ENCODE measurements at regions of chr2 and their contacts with region 1.

Region 1: GRCh38 chr2:7097348-7097895 is 180.2 kb downstream of the RNF144A start:
- DNase-seq: peak; percentile 60 to 87 (median 74)
- ATAC-seq: peak; percentile 90
- H3K4me3 ChIP-seq: peak overlapping the region; percentile 35 to 51
- H3K4me3 Mint-ChIP-seq: peak overlapping the region; percentile 78
- H3K27ac ChIP-seq: no peak overlapping the region
- H3K27ac Mint-ChIP-seq: no peak overlapping the region
- H3K4me1 ChIP-seq: peaks cover 6% of the 10 kb centered on the region
- H3K4me1 Mint-ChIP-seq: peaks cover 4% of the 10 kb centered on the region
- H3K27me3 ChIP-seq: no peaks in the 10 kb centered on the region
- H3K27me3 Mint-ChIP-seq: no peaks in the 10 kb centered on the region
- CTCF ChIP-seq: peak; percentile 99

Region 2: DNA sequence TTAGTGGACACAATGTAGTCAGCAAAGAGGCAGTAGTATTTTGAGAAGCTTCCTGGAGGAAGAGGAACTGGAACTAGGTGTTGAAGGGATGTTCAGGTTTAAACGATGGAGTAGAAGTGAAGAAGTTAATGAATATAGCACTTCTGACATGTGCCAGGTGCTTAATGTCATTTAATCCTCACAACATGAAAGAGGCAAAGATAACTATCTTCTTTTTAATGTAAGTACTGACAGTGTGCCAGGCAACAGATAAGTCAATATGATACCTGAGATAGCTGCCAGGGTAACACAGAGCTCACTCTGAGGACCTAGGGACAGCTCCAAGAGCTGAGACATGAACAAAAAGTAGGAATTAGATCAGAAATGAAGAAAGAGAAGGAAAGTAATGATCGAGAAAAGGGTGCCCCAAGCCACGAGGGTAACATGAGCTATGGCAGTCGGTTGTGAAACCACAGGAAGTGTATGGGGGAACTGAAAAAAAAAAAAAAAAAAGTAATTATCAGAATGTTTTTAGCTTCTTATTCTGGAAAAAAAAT is 39.5 kb before region 1 on chr2:
- CTCF ChIA-PET with region 1: interaction called, 10 read pairs
- POLR2A ChIA-PET with region 1: interaction called, 4 read pairs
- intact Hi-C with region 1: no loop called
- DNase-seq: peak in 3 of 9 experiments; percentile 28 to 56 (median 33)
- ATAC-seq: peak; percentile 43
- H3K4me3 ChIP-seq: peak overlapping the region in 1 of 2 experiments; percentile 30
- H3K4me3 Mint-ChIP-seq: peak overlapping the region; percentile 75
- H3K27ac ChIP-seq: peak overlapping the region; percentile 30 to 70
- H3K27ac Mint-ChIP-seq: peak overlapping the region; percentile 91
- H3K4me1 ChIP-seq: peaks cover 53% of the 10 kb centered on the region
- H3K4me1 Mint-ChIP-seq: peaks cover 25% of the 10 kb centered on the region
- H3K27me3 ChIP-seq: no peaks in the 10 kb centered on the region
- H3K27me3 Mint-ChIP-seq: no peaks in the 10 kb centered on the region
- CTCF ChIP-seq: no peak

Region 3: DNA sequence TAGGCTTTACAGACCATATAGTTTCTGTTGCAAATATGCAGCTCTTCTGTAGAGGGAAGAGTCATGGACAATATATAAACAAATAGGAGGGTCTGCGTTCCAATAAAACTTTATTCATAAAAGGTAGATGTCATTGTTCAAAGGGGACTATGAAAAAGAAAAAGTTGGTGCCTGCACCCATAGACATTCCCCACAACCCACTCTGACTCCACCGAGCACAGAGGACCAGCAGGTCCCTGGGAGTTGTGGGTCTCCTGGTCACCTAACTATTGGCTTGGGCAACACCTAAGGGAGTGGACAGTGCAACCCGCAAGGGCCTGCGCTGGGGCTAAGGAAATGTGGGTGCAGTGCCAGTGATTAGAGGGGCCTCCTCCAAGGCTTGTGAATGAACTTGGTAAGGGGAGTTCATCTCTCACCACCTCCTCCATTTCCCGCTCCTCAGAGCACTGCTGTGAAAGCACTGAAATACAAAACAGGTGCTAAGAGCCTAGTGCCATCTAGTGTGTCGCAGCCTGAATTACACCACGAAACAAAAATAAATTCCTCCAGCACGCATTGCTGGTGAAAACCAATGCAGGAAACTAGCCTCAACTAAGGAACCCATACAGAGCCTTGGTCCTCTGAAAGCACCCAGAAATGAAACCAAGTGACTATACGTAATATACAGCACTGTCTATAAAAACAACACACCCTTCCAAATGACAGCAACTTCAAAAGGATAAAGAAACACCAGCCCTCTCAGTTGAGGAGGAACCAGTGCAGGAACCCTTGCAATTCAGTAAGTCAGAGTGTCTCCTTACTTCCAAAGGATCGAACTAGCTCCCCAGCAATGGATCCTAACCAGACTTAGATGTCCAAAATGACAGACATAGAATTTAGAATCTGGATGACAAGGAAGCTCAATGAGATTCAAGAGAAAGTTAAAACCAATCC is 13.6 kb before region 1 on chr2:
- CTCF ChIA-PET with region 1: interaction called, 10 read pairs
- POLR2A ChIA-PET with region 1: no interaction called
- intact Hi-C with region 1: no loop called
- DNase-seq: peak in 2 of 9 experiments; percentile 23 to 31
- ATAC-seq: no peak
- H3K4me3 ChIP-seq: no peak overlapping the region
- H3K4me3 Mint-ChIP-seq: no peak overlapping the region
- H3K27ac ChIP-seq: no peak overlapping the region
- H3K27ac Mint-ChIP-seq: no peak overlapping the region
- H3K4me1 ChIP-seq: no peaks in the 10 kb centered on the region
- H3K4me1 Mint-ChIP-seq: no peaks in the 10 kb centered on the region
- H3K27me3 ChIP-seq: no peaks in the 10 kb centered on the region
- H3K27me3 Mint-ChIP-seq: no peaks in the 10 kb centered on the region
- CTCF ChIP-seq: peak; percentile 33

Region 4: DNA sequence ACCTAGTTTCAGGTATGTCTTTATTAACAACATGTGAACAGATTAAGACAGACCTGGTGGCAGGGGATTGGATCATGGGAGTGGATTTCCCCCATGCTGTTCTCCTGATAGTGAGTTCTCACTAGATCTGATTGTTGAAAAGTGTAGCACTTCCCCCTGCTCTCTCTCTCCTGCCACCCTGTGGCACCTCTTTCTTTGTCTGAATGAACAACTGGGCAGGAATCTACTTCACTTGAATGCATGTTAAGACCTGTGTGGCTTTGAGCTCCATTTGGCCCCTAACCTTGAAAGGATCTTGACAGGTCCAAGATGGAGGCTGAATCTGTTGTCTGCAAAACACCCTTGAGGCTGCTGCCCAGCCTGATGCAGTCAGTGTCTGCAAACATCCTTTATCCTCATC is 14.2 kb after region 1 on chr2:
- CTCF ChIA-PET with region 1: interaction called, 47 read pairs
- POLR2A ChIA-PET with region 1: no interaction called
- intact Hi-C with region 1: no loop called
- DNase-seq: no peak
- ATAC-seq: no peak
- H3K4me3 ChIP-seq: no peak overlapping the region
- H3K4me3 Mint-ChIP-seq: no peak overlapping the region
- H3K27ac ChIP-seq: no peak overlapping the region
- H3K27ac Mint-ChIP-seq: no peak overlapping the region
- H3K4me1 ChIP-seq: no peaks in the 10 kb centered on the region
- H3K4me1 Mint-ChIP-seq: no peaks in the 10 kb centered on the region
- H3K27me3 ChIP-seq: no peaks in the 10 kb centered on the region
- H3K27me3 Mint-ChIP-seq: no peaks in the 10 kb centered on the region
- CTCF ChIP-seq: no peak

Region 5: DNA sequence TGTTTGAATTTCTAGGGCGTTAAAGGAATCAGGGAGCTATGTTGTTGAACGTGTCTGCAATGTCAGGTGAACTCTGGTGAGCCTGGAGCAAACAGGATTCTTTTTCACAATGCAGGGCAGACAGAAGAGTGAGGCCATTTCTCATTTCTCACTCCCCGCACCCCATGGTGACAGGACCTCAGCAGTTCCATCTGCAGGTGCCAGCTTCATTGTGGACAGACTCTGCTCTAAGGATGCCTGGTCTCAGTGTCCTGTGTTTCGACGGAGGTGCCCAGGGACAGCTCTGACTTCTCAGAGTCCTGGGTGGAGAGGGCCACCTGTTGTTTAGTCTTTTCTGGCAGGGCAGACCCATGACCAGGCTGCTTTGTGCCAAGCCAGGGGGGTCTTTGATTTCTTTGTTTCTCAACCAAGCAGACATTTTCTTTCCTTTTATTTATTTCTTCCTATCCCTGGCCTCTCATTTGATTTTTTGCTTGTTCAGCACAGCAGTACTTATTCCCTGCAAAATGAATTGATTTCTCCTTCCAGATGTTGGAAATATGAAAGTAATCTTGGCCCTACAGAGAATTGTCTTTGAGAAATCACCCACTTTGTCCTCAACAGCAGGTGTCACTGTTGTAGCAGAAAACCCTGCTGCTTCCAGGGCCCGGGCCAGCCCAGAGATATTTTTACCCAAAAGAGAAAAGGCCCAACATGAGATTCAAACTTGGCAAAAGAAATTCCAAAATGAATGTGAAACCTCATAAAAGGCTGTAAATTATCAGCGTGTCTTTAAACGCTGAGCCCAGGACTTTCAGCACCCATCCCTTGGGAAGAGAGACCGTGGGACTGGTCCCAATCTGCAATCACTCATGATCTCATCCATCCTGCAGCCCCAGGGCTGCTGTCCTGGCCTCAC is 21.4 kb after region 1 on chr2:
- CTCF ChIA-PET with region 1: interaction called, 11 read pairs
- POLR2A ChIA-PET with region 1: no interaction called
- intact Hi-C with region 1: no loop called
- DNase-seq: peak in 2 of 9 experiments; percentile 20 to 30
- ATAC-seq: no peak
- H3K4me3 ChIP-seq: no peak overlapping the region
- H3K4me3 Mint-ChIP-seq: no peak overlapping the region
- H3K27ac ChIP-seq: no peak overlapping the region
- H3K27ac Mint-ChIP-seq: no peak overlapping the region
- H3K4me1 ChIP-seq: no peaks in the 10 kb centered on the region
- H3K4me1 Mint-ChIP-seq: no peaks in the 10 kb centered on the region
- H3K27me3 ChIP-seq: no peaks in the 10 kb centered on the region
- H3K27me3 Mint-ChIP-seq: no peaks in the 10 kb centered on the region
- CTCF ChIP-seq: peak; percentile 12

Region 6: GRCh38 chr2:7203055-7203467 is 105.6 kb after region 1 on chr2:
- CTCF ChIA-PET with region 1: interaction called, 4 read pairs
- POLR2A ChIA-PET with region 1: no interaction called
- intact Hi-C with region 1: loop called (anchors 2 to 5 kb)
- DNase-seq: peak; percentile 32 to 77 (median 59)
- ATAC-seq: peak; percentile 69
- H3K4me3 ChIP-seq: no peak overlapping the region
- H3K4me3 Mint-ChIP-seq: no peak overlapping the region
- H3K27ac ChIP-seq: no peak overlapping the region
- H3K27ac Mint-ChIP-seq: no peak overlapping the region
- H3K4me1 ChIP-seq: no peaks in the 10 kb centered on the region
- H3K4me1 Mint-ChIP-seq: peaks cover 2% of the 10 kb centered on the region
- H3K27me3 ChIP-seq: no peaks in the 10 kb centered on the region
- H3K27me3 Mint-ChIP-seq: no peaks in the 10 kb centered on the region
- CTCF ChIP-seq: peak; percentile 95

Region 7: GRCh38 chr2:8761529-8762164 is 1664.2 kb after region 1 on chr2:
- CTCF ChIA-PET with region 1: interaction called, 3 read pairs
- POLR2A ChIA-PET with region 1: no interaction called
- intact Hi-C with region 1: loop called in 1 of 2 experiments (anchors 1 kb)
- DNase-seq: peak in 2 of 9 experiments; percentile 36 to 48
- ATAC-seq: no peak
- H3K4me3 ChIP-seq: no peak overlapping the region
- H3K4me3 Mint-ChIP-seq: no peak overlapping the region
- H3K27ac ChIP-seq: no peak overlapping the region
- H3K27ac Mint-ChIP-seq: no peak overlapping the region
- H3K4me1 ChIP-seq: no peaks in the 10 kb centered on the region
- H3K4me1 Mint-ChIP-seq: no peaks in the 10 kb centered on the region
- H3K27me3 ChIP-seq: no peaks in the 10 kb centered on the region
- H3K27me3 Mint-ChIP-seq: no peaks in the 10 kb centered on the region
- CTCF ChIP-seq: peak; percentile 50

Region 8: DNA sequence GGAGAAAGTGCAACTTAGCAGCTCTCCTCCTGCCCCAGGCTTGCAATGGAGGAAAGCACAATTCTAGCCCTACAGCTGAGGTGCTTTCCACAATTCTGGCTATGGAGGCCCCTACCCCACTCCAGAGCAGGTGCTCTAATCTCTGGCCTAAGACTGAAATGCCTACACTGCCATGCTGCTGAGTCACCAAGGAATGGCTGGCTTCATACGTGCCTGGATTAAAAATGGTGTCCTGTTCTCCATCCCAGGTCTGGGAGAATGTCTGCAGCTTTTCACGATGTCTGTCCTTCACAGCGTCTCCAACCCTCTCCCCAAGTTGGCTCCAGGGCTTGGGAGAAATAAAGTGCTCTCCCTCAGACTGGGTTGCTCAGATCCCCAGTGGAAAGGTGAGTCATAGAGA is 1857.6 kb after region 1 on chr2:
- CTCF ChIA-PET with region 1: no interaction called
- POLR2A ChIA-PET with region 1: no interaction called
- intact Hi-C with region 1: no loop called
- DNase-seq: no peak
- ATAC-seq: no peak
- H3K4me3 ChIP-seq: no peak overlapping the region
- H3K4me3 Mint-ChIP-seq: no peak overlapping the region
- H3K27ac ChIP-seq: no peak overlapping the region
- H3K27ac Mint-ChIP-seq: no peak overlapping the region
- H3K4me1 ChIP-seq: no peaks in the 10 kb centered on the region
- H3K4me1 Mint-ChIP-seq: peaks cover 2% of the 10 kb centered on the region
- H3K27me3 ChIP-seq: no peaks in the 10 kb centered on the region
- H3K27me3 Mint-ChIP-seq: peaks cover 15% of the 10 kb centered on the region
- CTCF ChIP-seq: no peak

Measured in CD8-positive, alpha-beta T cell (primary cell).